ENCODE measurements at regions of chr9 and their contacts with region 1.

Region 1: DNA sequence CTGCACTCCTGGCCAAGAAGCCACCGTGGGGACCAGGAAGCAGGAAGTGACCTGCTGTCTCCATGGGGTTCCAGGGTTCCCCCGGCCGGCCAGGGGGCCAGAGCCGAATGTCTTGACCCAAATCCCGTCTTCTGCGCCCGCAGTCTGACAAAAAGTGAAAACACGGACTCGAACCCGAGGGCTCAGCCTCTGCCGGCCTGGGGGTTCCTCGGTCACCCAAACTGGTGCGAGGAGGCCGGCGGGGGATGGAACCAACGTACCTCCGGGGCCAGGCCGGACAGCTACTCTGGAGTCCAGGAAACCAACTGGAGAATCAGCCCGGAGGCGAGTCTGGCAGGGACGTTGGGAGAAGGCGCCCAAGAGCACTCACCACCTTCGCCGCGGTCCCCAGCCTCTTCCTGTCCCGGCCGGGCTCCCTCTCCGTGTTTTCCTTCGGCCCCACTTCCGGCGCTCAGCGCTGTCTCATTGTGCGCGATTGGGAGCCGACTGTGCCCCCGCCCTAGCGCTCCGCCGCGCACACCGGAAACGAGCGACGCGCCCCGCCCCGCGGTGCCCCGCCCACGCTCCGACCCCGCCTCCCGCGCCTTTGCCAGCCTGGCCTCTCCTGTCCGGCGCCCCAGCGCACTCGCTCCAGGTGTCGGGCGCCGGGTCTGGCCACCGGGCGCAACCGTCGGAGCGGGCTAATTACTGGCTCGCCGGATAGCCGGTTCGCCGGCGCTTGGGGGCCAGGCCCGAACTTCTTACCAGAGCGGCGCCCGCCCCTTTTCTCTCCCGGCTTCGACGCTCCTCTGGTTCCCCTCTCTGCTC is at the start of gene TUT7:
- DNase-seq: peak; percentile 98
- ATAC-seq: peak; percentile 88
- H3K4me3 Mint-ChIP-seq: peak within 1 kb of the TSS; percentile 93
- H3K27ac Mint-ChIP-seq: peak within 1 kb of the TSS; percentile 92
- H3K4me1 Mint-ChIP-seq: peaks cover 51% of the 10 kb centered on the region
- H3K27me3 Mint-ChIP-seq: no peaks in the 10 kb centered on the region
- CTCF ChIP-seq: no peak
- total RNA-seq, gene TUT7: 43.8 and 50.4 TPM in 2 replicates

Region 2: DNA sequence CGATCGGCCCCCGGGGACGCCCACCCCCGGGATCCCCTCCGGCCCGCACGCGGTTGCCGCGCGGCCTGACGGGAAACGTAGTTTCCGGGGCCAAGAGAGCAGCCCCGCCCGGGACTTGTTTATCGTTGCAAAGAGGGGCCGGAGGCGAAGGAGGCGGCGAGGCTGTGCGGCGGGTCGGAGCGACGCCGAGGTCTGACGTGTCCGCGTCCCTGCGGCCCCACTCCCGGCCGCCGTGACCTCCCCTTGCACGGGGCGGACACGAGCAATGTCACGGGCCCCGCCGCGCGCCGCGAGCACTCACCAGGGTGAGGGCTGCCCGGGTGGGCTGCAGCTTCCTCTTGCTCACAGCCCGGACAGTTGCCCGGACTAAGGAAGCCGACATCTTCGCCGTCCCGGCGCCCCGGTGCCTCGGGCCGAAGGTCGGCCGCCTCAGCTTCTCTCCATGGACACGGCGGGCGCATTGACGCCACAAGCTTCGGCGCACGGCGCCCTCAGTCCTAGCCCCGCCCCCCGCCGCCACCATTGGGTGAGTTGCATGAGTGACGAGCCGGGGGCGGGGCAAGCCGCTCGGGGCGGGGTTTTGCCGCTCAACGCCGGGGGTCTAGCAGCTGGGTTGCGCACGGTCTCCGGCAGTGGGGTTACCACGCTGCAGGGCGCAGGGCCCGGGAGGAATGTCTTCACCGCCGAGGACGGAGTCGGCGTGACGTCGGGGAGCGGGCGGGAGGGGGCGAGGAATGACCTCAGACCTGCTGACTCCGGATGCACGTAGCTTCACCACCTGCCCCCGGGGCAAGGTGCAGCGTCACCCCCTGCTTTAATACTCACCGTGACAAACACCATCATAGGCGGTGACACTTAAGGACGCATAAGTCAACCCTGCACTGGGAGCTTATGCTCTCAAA is 71.9 kb before region 1 on chr9 and contains the start of gene ISCA1:
- CTCF ChIA-PET with region 1: no interaction called
- POLR2A ChIA-PET with region 1: interaction called, 13 read pairs
- intact Hi-C with region 1: loop called (anchors 1 kb)
- DNase-seq: peak; percentile 99
- ATAC-seq: peak; percentile 88
- H3K4me3 Mint-ChIP-seq: peak within 1 kb of the TSS; percentile 92
- H3K27ac Mint-ChIP-seq: peak within 1 kb of the TSS; percentile 93
- H3K4me1 Mint-ChIP-seq: peaks cover 35% of the 10 kb centered on the region
- H3K27me3 Mint-ChIP-seq: no peaks in the 10 kb centered on the region
- CTCF ChIP-seq: no peak
- total RNA-seq, gene ISCA1: 16.0 TPM in 2 replicates

Region 3: GRCh38 chr9:86337469-86338108 is 16.6 kb before region 1 on chr9:
- CTCF ChIA-PET with region 1: interaction called, 6 read pairs
- POLR2A ChIA-PET with region 1: interaction called, 15 read pairs
- intact Hi-C with region 1: loop called (anchors 1 kb)
- DNase-seq: no peak
- ATAC-seq: peak; percentile 25
- H3K4me3 Mint-ChIP-seq: peak overlapping the region; percentile 49
- H3K27ac Mint-ChIP-seq: peak overlapping the region; percentile 51
- H3K4me1 Mint-ChIP-seq: peaks cover 53% of the 10 kb centered on the region
- H3K27me3 Mint-ChIP-seq: no peaks in the 10 kb centered on the region
- CTCF ChIP-seq: no peak

Region 4: DNA sequence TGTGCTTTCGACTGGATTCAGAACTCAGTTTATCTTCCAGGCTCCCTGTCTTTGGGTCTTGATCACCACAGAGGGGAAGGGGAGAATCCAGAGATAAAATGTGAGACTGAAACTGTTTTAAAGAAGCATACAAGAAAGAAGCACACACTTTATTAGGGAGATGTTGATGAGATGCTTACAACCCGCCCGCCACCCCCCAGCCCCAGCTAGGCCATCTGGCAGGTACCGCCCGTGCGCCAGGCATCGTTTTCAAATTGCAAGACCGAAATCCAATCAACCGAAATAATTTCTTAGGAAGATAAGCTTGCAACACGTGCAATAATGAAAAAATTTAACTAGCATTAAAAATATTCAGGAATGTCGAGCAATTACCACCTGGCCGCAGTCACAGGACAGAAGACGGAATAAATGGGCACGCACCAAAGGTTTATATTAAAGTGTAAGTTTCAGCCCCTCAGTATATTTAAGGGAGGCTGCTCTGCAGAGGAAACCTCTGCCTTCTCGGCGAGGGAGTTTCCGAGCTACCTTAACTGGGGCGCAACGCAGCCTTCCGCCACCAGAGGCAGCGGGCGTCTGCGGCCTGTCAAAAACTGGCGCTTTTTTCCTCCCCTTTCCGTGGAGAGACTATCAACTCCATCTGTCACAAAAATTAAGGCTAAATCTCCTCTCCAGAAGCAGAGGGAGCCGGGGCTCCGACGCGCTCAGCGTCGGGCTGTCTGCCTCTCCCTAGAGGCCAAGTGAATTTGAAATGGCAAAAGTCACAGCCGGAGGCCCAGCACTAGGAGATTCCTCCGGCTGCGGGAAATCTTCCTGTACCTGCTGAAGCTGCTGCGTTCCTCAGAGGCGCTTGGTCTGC is 594.1 kb after region 1 on chr9:
- CTCF ChIA-PET with region 1: no interaction called
- POLR2A ChIA-PET with region 1: no interaction called
- intact Hi-C with region 1: loop called (anchors 2 kb)
- DNase-seq: peak; percentile 42
- ATAC-seq: peak; percentile 72
- H3K4me3 Mint-ChIP-seq: peak overlapping the region; percentile 82
- H3K27ac Mint-ChIP-seq: no peak overlapping the region
- H3K4me1 Mint-ChIP-seq: peaks cover 19% of the 10 kb centered on the region
- H3K27me3 Mint-ChIP-seq: peaks cover 20% of the 10 kb centered on the region
- CTCF ChIP-seq: no peak